A549 (cell line): ENCODE measurements at regions of chr1 and their contacts with region 1.

Region 1: GRCh38 chr1:39408641-39409054 is 82.8 kb upstream of the BMP8A start:
- DNase-seq: peak; percentile 86 to 91
- ATAC-seq: peak; percentile 86 to 91
- H3K4me3 ChIP-seq: peak overlapping the region; percentile 71
- H3K27ac ChIP-seq: peak overlapping the region; percentile 91 to 97
- H3K4me1 ChIP-seq: peaks cover 65% of the 10 kb centered on the region
- CTCF ChIP-seq: no peak
- EP300 ChIP-seq: no peak
- POLR2A ChIP-seq: 0 out of 2 replicates have a peak, but pooled peaks have one; percentile 9
- RAD21 ChIP-seq: no peak

Region 2: GRCh38 chr1:38804062-38804886 is 604.4 kb before region 1 on chr1:
- CTCF ChIA-PET with region 1: no interaction called
- POLR2A ChIA-PET with region 1: no interaction called
- DNase-seq: no peak
- ATAC-seq: peak; percentile 56 to 68; a peak in 4 of 6 replicates
- H3K4me3 ChIP-seq: peak overlapping the region; percentile 40
- H3K27ac ChIP-seq: no peak overlapping the region
- H3K4me1 ChIP-seq: no peaks in the 10 kb centered on the region
- CTCF ChIP-seq: no peak
- EP300 ChIP-seq: no peak
- POLR2A ChIP-seq: no peak
- RAD21 ChIP-seq: no peak

Region 3: DNA sequence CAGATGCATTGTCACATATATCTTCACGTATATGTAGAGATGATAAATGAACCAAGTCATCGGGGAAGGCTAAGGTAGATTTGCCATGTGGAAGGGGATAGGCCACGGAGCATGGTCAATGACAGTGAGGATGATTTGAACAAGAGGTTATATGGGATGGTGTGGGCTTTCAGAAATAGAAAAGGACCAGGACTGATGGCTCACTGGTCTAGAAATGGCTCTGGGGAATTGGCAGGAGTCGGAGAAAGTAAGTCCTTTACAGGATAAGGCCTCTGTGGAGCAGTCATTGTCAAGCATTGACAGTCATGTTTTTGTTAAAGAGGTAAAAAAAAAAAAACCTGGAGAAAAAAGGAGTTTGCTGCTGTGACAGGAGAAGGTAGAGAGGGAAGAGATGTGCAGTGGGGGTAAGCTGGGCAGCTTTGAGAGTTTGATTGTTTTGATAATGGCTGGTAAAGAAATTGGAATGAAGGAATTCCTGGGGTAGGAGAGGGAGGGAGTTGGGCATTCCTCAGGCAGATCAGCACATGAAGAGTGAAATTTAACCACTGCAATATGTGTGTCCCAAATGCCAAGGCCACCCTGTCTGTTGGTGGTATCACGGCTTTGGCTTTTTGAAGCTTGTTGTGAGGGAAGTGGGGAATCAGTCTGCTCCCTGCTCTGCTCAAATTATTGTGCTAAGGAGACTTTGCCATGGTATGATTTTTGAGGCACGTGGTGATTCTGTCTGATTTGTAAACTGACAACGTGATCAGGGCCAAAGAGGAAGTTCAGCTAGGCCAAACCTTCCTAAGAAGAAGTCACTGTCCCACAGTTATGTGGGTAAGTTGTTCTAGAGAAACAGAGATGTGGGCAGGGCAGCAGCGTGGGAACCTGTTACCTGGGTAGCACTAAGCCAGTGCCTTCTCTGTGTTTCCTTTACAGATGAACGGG is 178.1 kb before region 1 on chr1:
- CTCF ChIA-PET with region 1: no interaction called
- POLR2A ChIA-PET with region 1: no interaction called
- DNase-seq: no peak
- ATAC-seq: no peak; a peak in 1 of 6 replicates
- H3K4me3 ChIP-seq: no peak overlapping the region
- H3K27ac ChIP-seq: peak overlapping the region in 1 of 2 experiments; percentile 21; a peak in 1 of 6 replicates
- H3K4me1 ChIP-seq: peaks cover 15% of the 10 kb centered on the region; the same call in 2 of the 3 replicates
- CTCF ChIP-seq: no peak
- EP300 ChIP-seq: no peak
- POLR2A ChIP-seq: no peak
- RAD21 ChIP-seq: no peak

Region 4: DNA sequence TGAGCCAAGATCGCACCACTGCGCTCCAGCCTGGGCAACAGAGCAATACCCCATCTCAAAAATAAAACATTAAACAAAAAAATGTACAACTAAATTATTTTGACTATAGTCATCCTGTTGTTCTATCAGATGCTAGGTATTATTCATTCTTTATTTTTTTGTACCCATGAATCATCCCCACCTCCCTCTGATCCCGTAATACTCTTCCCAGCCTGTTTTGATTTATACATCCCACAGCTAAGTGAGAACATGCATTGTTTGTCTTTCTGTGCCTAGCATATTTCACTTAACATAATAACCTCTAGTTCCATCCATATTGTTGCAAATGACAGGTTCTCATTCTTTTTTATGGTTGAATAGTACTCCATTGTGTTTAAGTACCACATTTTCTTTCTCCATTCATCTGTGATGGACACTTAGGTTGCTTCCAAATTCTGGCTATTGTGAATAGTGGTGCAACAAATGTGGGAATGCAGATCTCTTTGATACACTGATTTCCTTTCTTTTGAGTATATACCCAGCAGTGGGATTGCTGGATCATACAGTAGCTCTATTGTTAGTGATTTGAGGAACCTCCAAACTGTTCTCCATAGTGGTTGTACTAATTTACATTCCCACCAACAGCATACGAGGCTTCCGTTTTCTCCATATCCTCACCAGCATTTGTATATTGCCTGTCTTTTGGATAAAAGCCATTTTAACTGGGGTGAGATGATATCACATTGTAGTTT is 119.7 kb before region 1 on chr1:
- CTCF ChIA-PET with region 1: interaction called, 11 read pairs
- POLR2A ChIA-PET with region 1: no interaction called
- DNase-seq: no peak
- ATAC-seq: no peak
- H3K4me3 ChIP-seq: no peak overlapping the region
- H3K27ac ChIP-seq: no peak overlapping the region
- H3K4me1 ChIP-seq: no peaks in the 10 kb centered on the region
- CTCF ChIP-seq: no peak
- EP300 ChIP-seq: no peak
- POLR2A ChIP-seq: no peak
- RAD21 ChIP-seq: no peak

Region 5: GRCh38 chr1:39368045-39368444 is 40.6 kb before region 1 on chr1:
- CTCF ChIA-PET with region 1: interaction called, 10 read pairs
- POLR2A ChIA-PET with region 1: no interaction called
- DNase-seq: no peak
- ATAC-seq: no peak
- H3K4me3 ChIP-seq: no peak overlapping the region
- H3K27ac ChIP-seq: no peak overlapping the region
- H3K4me1 ChIP-seq: no peaks in the 10 kb centered on the region
- CTCF ChIP-seq: no peak
- EP300 ChIP-seq: no peak
- POLR2A ChIP-seq: no peak
- RAD21 ChIP-seq: no peak

Region 6: GRCh38 chr1:39391691-39392679 is 16.7 kb before region 1 on chr1:
- CTCF ChIA-PET with region 1: interaction called, 56 read pairs
- POLR2A ChIA-PET with region 1: interaction called, 12 read pairs
- DNase-seq: peak; percentile 74 to 75
- ATAC-seq: peak; percentile 76 to 85
- H3K4me3 ChIP-seq: peak overlapping the region; percentile 19; the same call in 1 of the 3 replicates
- H3K27ac ChIP-seq: peak overlapping the region; percentile 89 to 93
- H3K4me1 ChIP-seq: peaks cover 75% of the 10 kb centered on the region
- CTCF ChIP-seq: no peak
- EP300 ChIP-seq: peak in 1 of 2 experiments; percentile 39; a peak in 1 of 5 replicates
- POLR2A ChIP-seq: no peak
- RAD21 ChIP-seq: no peak

Region 7: DNA sequence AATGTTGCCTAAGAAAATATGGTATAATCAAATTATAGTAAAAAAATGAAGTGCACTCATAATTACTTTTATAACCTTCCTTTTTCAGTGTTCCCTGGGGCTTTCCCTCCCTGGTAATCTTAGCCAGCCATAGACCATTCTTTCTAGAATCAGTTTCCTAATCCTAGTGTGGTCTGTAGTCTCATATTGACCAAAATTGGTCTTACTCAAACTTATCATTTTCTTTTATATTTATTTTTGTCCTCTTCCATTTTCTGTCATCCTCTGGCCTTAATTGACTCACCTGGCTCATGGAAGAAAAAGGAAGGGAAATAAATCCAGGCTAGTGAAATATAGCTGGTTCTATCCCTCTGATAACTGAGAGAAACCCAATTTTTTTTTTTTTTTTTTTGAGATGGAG is 11.8 kb after region 1 on chr1:
- CTCF ChIA-PET with region 1: interaction called, 25 read pairs
- POLR2A ChIA-PET with region 1: no interaction called
- DNase-seq: no peak
- ATAC-seq: no peak
- H3K4me3 ChIP-seq: no peak overlapping the region
- H3K27ac ChIP-seq: no peak overlapping the region
- H3K4me1 ChIP-seq: peaks cover 8% of the 10 kb centered on the region; the same call in 2 of the 3 replicates
- CTCF ChIP-seq: no peak
- EP300 ChIP-seq: no peak
- POLR2A ChIP-seq: no peak
- RAD21 ChIP-seq: no peak

Region 8: DNA sequence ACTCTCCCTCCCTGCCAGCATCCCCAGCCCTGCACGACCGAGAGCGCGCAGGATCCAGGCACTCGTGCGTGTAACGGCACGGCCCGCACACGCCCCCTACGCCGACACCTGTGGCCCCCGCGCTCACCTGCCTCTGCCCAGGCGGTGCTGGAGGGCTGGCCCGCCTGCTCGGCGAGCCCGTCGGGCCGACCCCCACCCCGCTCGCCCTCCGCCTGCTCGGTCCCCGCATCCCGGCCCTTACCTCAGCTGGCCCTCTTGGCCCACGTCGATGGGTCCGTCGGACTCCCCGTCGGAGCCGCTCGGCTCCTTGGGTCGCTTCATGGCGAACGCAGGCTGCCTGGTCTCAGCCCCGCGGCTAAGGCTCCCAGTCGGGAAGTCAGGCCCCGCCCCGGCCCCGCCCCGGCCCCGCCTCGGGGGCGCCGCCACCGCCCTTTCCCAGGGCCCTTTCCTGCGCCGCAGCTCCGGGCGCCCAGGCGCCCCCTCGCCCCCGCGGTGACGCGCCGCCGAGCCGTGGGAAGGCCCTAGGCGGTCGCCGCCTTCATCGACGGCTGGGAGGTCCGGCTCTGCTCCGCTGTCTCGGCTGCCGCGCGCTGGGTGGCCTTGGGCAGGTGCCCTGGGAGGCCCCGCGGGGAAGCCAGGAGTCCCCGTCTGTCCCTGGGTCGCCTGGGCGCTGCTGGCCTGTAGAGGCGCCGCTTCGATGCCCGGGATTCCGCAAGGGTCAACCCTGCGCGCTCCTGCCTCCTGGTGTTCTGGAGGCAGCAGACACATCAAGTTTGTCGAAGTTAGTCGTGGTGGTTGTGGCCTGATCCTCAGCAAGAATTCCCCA is 230.9 kb after region 1 on chr1 and contains the start of gene HEYL:
- CTCF ChIA-PET with region 1: no interaction called
- POLR2A ChIA-PET with region 1: no interaction called
- DNase-seq: peak; percentile 86
- ATAC-seq: peak; percentile 96
- H3K4me3 ChIP-seq: peak within 1 kb of the TSS; percentile 56
- H3K27ac ChIP-seq: peak within 1 kb of the TSS; percentile 80 to 95
- H3K4me1 ChIP-seq: no peaks in the 10 kb centered on the region
- CTCF ChIP-seq: peak; percentile 57
- EP300 ChIP-seq: no peak
- POLR2A ChIP-seq: peak; percentile 69
- RAD21 ChIP-seq: peak in 1 of 2 experiments; percentile 27; a peak in 1 of 5 replicates
- polyA plus RNA-seq, gene HEYL: 2.2 and 2.9 TPM in 2 replicates